AG04449 (cell line): ENCODE measurements at regions of chr11 and their contacts with region 1.

Region 1: DNA sequence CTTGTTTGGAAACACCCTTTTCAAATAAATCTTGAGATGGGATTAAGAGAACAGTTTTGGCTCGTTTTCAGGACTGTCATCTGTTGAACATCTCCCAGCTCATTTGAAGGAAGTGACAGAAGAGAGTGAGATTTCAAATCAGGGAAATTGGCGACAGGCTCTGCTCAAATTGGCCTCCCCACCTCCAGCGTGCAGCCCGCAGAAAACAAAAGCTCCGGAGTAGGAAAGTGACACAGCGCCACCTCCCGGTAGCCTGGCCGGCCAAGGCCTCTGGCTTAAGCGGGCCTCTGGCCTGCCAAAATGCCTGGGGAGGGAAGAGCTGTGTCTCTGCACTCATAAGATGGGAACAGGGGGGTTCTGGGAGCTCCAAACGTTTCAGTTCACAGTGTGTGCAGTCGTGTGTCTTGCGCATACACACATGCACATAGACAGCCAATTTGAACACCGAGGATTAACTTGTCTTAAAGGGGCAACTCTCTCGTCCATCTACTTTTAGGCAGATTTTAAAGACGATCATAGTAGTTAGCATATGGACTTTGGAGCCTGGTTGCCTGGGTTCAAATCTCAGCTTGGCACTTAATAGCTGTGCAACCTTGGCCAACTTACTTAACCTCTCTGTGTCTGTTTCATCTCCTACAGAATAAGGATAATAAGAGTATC is 132.7 kb upstream of the RCN1 start:
- DNase-seq: no peak
- H3K4me3 ChIP-seq: no peak overlapping the region
- CTCF ChIP-seq: peak; percentile 86

Region 2: GRCh38 chr11:31340903-31341572 is 617.2 kb before region 1 on chr11:
- CTCF ChIA-PET with region 1: interaction called, 11 read pairs
- POLR2A ChIA-PET with region 1: no interaction called
- DNase-seq: no peak
- H3K4me3 ChIP-seq: no peak overlapping the region
- CTCF ChIP-seq: peak; percentile 51

Region 3: DNA sequence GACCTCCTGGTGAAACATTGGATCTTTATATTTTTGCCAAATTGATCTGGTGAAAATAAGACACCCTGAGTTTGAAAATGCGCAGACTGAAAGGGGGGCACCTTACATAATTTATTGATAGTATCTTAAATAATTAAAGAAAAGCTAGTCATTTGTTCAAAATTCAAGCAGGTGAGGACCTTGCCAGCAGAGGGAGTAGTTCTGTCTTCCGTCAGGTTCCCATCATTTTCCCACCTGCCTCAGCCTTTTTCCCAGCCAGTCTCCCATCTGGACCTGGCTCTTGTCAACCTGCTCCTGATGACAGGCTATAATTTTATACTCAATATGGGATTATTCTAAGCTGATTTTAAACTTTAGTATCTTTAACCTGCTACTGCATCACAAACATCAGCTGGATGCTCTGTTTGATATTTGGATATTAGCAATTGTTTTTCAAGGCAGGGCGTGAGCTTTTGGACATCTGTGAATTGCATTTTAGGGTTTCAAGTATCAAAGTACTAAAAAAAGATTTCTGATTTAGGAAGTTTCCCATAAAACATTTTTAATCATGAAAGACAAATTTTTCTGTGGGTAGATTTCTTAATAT is 316.6 kb before region 1 on chr11:
- CTCF ChIA-PET with region 1: interaction called, 63 read pairs
- POLR2A ChIA-PET with region 1: no interaction called
- DNase-seq: no peak
- H3K4me3 ChIP-seq: no peak overlapping the region
- CTCF ChIP-seq: peak; percentile 48

Region 4: GRCh38 chr11:31921081-31921480 is 37.1 kb before region 1 on chr11:
- CTCF ChIA-PET with region 1: interaction called, 16 read pairs
- POLR2A ChIA-PET with region 1: no interaction called
- DNase-seq: peak; percentile 41
- H3K4me3 ChIP-seq: no peak overlapping the region
- CTCF ChIP-seq: no peak

Region 5: GRCh38 chr11:31940371-31941037 is 17.7 kb before region 1 on chr11:
- CTCF ChIA-PET with region 1: interaction called, 43 read pairs
- POLR2A ChIA-PET with region 1: no interaction called
- DNase-seq: peak; percentile 42
- H3K4me3 ChIP-seq: no peak overlapping the region
- CTCF ChIP-seq: no peak

Region 6: DNA sequence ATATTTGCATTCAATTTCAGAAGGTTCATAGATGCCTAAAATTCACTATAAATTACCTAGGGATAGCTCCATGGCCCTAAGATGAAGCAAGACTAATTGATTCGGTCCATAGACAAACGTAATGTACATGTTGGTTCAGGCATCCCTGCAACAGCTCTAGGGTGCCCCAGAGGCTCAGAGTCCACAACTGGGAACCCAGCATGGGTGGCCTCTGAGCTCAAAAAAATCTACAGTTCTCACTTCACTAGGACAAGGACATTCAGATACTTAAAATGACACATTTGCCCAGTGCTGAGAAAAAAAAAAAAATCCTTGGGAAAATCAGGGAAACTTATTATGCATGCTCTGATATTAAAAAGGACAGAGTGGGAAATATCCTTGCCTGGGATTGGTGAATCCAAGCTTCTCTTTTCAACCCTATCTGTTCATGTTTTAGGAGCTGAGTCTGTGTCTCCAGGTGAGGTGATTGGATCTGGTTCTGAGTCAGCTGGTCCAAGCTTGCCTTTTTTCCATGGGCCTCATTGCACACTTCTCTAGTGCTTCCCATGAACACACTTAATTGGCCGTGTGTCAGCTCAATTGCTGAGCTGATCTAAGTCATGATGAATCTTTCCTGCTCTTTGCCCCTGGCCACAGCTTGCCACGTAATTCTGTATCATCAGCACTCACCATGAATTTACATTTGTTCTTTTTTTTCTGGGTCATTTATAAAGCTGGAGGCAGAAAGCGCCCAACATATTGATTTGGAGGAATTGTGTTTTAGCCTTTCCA is 16.3 kb after region 1 on chr11:
- CTCF ChIA-PET with region 1: interaction called, 80 read pairs
- POLR2A ChIA-PET with region 1: no interaction called
- DNase-seq: peak; percentile 38
- H3K4me3 ChIP-seq: no peak overlapping the region
- CTCF ChIP-seq: no peak

Region 7: DNA sequence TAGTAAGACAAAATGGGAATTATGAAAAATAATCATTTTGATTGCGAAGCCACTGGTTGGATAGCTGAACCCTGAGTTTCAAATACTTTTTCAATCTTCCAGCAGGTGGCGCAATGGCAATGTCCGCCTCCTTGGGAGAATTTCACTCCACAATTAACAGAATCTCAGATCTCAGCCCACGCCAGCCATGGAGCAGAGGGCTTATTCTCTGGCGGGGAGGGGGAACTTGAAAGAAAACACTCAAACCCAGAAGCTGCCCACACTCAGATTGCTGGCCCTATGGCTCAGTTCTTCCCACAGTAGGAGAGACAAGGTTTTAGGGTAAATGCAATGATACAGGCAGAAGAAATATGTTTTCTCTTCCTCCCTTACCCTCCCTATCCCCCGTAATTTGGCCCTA is 94.0 kb after region 1 on chr11:
- CTCF ChIA-PET with region 1: interaction called, 15 read pairs
- POLR2A ChIA-PET with region 1: no interaction called
- DNase-seq: no peak
- H3K4me3 ChIP-seq: no peak overlapping the region
- CTCF ChIP-seq: peak; percentile 58